ENCODE measurements at regions of chr6 and their contacts with region 1.

Region 1: GRCh38 chr6:30926644-30927043 is 5.3 kb downstream of the SFTA2 start:
- DNase-seq: no peak
- ATAC-seq: no peak
- H3K4me3 ChIP-seq: no peak overlapping the region
- H3K27ac ChIP-seq: no peak overlapping the region
- H3K4me1 ChIP-seq: no peaks in the 10 kb centered on the region
- H3K27me3 ChIP-seq: no peaks in the 10 kb centered on the region
- CTCF ChIP-seq: no peak

Region 2: GRCh38 chr6:30891816-30892538 is 34.7 kb before region 1 on chr6:
- CTCF ChIA-PET with region 1: interaction called, 11 read pairs
- POLR2A ChIA-PET with region 1: no interaction called
- in situ Hi-C with region 1: no loop called
- intact Hi-C with region 1: no loop called
- DNase-seq: no peak
- ATAC-seq: no peak
- H3K4me3 ChIP-seq: no peak overlapping the region
- H3K27ac ChIP-seq: no peak overlapping the region
- H3K4me1 ChIP-seq: peaks cover 5% of the 10 kb centered on the region
- H3K27me3 ChIP-seq: no peaks in the 10 kb centered on the region
- CTCF ChIP-seq: no peak

Region 3: GRCh38 chr6:31643818-31644454 is 717.3 kb after region 1 on chr6:
- CTCF ChIA-PET with region 1: no interaction called
- POLR2A ChIA-PET with region 1: interaction called, 11 read pairs
- in situ Hi-C with region 1: no loop called
- intact Hi-C with region 1: no loop called
- DNase-seq: no peak
- ATAC-seq: 0 out of 2 replicates have a peak, but pooled peaks have one; percentile 38
- H3K4me3 ChIP-seq: no peak overlapping the region
- H3K27ac ChIP-seq: no peak overlapping the region
- H3K4me1 ChIP-seq: no peaks in the 10 kb centered on the region
- H3K27me3 ChIP-seq: no peaks in the 10 kb centered on the region
- CTCF ChIP-seq: no peak